ENCODE measurements at regions of chr15 and their contacts with region 1.

Region 1: DNA sequence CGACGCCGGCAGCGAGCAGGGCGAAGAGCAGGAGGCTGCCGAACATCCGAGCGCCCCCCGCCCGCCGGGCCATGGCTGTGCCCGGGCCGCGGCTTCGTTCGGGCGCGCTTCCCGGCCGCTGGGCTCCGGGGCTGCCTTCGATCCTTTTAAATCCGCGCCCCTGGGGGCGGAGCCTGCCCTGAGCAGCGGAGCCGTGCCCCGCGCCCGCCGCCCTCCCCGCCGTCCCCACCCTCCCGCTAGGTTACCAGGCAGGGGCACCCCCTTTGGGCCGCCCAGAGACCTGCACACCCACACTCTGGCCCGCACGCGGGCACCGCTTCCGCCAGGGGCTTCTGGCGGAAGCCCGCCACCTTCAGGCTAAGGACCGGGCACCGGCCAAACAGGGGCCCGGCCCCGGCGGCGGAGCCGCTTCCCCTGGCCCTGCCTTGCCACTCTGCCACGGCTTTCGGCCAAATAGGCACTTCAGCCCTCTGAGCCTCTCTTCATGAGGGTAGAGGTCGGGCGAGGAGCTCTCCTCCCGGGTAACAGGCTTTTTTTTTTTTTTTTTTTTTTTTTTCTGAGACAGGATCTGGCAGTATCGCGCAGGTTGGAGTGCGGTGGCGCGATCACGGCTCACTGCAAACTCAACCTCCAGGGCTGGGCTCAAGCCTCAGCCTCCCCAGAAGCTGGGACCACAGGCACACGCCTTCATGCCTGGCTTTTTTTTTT is at the start of gene NMB:
- DNase-seq: peak; percentile 70 to 88
- H3K4me3 ChIP-seq: peak within 1 kb of the TSS; percentile 70
- H3K27ac ChIP-seq: peak within 1 kb of the TSS; percentile 83
- H3K4me1 ChIP-seq: peaks cover 23% of the 10 kb centered on the region
- H3K27me3 ChIP-seq: no peaks in the 10 kb centered on the region
- CTCF ChIP-seq: peak; percentile 73
- total RNA-seq, gene NMB: 66.7 and 77.1 TPM in 2 replicates

Region 2: GRCh38 chr15:84783496-84784251 is 125.4 kb after region 1 on chr15:
- CTCF ChIA-PET with region 1: interaction called, 6 read pairs
- POLR2A ChIA-PET with region 1: no interaction called
- intact Hi-C with region 1: loop called (anchors 10 kb)
- DNase-seq: no peak
- H3K4me3 ChIP-seq: no peak overlapping the region
- H3K27ac ChIP-seq: no peak overlapping the region
- H3K4me1 ChIP-seq: no peaks in the 10 kb centered on the region
- H3K27me3 ChIP-seq: no peaks in the 10 kb centered on the region
- CTCF ChIP-seq: no peak

Region 3: GRCh38 chr15:85440451-85440850 is 782.2 kb after region 1 on chr15:
- CTCF ChIA-PET with region 1: no interaction called
- POLR2A ChIA-PET with region 1: no interaction called
- intact Hi-C with region 1: no loop called
- DNase-seq: no peak
- H3K4me3 ChIP-seq: no peak overlapping the region
- H3K27ac ChIP-seq: no peak overlapping the region
- H3K4me1 ChIP-seq: peaks cover 34% of the 10 kb centered on the region
- H3K27me3 ChIP-seq: no peaks in the 10 kb centered on the region
- CTCF ChIP-seq: no peak